Common myeloid progenitor, CD34-positive (primary cell): ENCODE measurements at regions of chr16 and their contacts with region 1.

Region 1: DNA sequence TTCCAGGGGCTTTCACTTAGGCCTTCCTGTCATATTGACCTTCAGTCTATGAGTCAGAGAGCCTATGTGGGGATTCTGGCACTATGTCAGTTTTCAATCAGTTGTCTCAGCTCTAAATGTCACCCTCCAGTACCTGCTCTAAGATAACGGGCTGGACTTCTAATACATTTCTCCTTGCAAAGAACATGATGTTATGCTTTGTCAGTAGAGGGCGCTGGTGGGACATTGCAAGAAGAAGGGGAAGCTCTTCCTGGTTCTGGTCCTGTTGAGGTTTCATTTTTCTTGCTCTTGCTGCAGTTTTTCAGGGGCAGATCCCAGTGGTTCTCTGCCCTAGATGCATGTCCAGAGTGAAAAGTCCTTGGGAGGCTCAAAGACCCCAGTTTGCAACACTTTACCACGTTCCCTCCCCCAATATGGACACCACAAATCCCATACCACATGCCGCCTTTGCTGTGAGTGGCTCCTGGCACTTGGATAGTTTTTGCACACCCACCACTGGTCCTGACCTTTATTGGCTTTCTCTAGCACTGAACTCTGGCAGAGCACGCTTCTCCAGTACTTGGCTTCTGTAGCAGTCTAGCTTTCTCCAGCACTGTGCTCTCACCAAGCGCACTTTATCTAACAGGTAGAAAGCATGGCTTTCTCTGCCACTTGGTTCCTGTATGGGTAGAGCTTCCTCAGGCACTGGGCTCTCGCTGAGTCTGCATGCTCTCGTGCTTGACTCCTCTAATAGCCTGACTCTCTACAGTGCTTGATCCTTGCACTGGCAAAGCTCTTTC is 49.0 kb downstream of the BCL7C start:
- DNase-seq: peak; percentile 92 to 96 (median 94)
- H3K4me3 ChIP-seq: peak overlapping the region in 2 of 7 experiments; percentile 32 to 63
- H3K27ac ChIP-seq: no peak overlapping the region
- H3K4me1 ChIP-seq: peaks cover 0 to 8% (median 7%) of the 10 kb centered on the region in 4 experiments
- H3K27me3 ChIP-seq: no peaks in the 10 kb centered on the region

Region 2: GRCh38 chr16:30834130-30834740 is 10.6 kb before region 1 on chr16:
- CTCF ChIA-PET with region 1: interaction called, 11 read pairs
- POLR2A ChIA-PET with region 1: no interaction called
- DNase-seq: no peak
- H3K4me3 ChIP-seq: no peak overlapping the region
- H3K27ac ChIP-seq: no peak overlapping the region
- H3K4me1 ChIP-seq: no peaks in the 10 kb centered on the region
- H3K27me3 ChIP-seq: no peaks in the 10 kb centered on the region

Region 3: DNA sequence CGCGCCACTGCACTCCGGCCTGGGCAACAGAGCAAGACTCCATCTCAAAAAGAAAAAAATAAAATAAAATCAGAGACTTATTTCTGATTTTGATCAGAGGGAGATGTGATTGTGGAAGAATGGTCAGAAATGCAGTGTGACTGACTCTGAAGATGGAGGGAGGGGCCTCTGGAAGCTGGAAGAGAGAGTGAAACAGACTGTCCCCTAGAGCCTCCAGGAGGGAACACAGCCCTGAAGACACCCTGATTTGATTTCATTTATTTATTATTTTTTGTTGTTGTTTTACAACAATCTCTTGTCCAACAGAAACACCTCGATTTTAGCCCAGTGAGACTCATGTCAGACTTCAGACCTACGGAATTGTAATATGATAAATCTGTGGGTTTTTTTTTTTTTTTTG is 22.9 kb after region 1 on chr16:
- CTCF ChIA-PET with region 1: interaction called, 36 read pairs
- POLR2A ChIA-PET with region 1: no interaction called
- DNase-seq: peak; percentile 20 to 46 (median 44)
- H3K4me3 ChIP-seq: no peak overlapping the region
- H3K27ac ChIP-seq: no peak overlapping the region
- H3K4me1 ChIP-seq: no peaks in the 10 kb centered on the region
- H3K27me3 ChIP-seq: no peaks in the 10 kb centered on the region

Region 4: DNA sequence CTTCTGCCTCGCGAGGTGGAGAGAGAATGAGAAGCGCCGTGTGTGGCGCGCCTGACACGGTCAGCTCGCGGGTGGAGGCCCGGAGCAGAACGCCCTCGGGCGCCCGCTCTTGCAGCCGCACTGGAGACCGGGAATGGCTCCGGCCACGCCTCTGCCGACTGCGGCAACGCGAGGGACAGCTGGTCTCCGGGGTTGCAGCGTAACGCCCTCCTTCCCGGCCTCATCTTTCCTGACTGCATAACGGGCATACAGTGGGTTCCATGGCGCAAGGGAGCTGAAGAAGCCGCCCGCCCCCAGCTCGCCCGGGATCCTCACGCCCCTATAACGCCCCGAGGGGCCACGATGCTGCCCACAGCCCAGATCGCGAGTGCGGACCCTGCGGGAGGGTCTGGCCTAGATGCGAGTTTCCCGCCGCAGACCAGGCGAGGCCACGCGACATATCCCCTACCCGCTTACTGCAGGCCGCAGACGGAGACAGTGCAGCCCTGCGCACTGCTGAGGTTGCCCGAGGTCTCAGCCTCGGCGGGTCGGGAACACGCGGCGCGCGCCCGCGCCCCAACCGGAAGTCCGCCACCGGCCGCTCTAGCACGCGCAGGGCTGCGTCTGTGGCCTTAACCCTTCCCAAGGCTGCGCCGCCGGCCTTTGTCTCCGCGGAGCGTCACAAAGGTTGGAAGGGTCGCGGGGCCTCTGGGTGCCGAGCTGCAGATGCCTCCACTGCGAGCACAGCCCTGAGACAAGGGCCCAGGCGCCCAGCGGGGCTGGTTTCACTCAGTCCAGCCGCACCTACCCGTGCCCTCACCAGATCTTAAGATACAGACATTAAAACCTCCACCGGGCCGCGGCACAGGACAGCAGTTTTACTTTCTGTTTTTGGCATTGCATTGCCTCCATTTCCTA is 30.2 kb after region 1 on chr16:
- CTCF ChIA-PET with region 1: interaction called, 36 read pairs
- POLR2A ChIA-PET with region 1: no interaction called
- DNase-seq: peak; percentile 90 to 94 (median 91)
- H3K4me3 ChIP-seq: peak overlapping the region; percentile 67 to 95 (median 91)
- H3K27ac ChIP-seq: peak overlapping the region; percentile 78 to 95
- H3K4me1 ChIP-seq: peaks cover 5 to 30% (median 23%) of the 10 kb centered on the region in 4 experiments
- H3K27me3 ChIP-seq: no peaks in the 10 kb centered on the region

Region 5: DNA sequence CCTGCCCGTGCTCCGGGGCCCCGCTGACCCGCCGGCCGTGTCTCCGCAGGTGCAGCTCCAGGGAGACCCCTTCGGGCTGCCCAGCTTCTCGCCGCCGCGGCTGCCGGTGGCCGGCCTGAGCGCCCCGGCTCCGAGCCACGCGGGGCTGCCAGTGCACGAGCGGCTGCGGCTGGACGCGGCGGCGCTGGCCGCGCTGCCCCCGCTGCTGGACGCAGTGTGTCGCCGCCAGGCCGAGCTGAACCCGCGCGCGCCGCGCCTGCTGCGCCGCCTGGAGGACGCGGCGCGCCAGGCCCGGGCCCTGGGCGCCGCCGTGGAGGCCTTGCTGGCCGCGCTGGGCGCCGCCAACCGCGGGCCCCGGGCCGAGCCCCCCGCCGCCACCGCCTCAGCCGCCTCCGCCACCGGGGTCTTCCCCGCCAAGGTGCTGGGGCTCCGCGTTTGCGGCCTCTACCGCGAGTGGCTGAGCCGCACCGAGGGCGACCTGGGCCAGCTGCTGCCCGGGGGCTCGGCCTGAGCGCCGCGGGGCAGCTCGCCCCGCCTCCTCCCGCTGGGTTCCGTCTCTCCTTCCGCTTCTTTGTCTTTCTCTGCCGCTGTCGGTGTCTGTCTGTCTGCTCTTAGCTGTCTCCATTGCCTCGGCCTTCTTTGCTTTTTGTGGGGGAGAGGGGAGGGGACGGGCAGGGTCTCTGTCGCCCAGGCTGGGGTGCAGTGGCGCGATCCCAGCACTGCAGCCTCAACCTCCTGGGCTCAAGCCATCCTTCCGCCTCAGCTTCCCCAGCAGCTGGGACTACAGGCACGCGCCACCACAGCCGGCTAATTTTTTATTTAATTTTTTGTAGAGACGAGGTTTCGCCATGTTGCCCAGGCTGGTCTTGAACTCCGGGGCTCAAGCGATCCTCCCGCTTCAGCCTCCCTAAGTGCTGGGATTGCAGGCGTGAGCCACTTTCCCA is 57.4 kb after region 1 on chr16:
- CTCF ChIA-PET with region 1: interaction called, 52 read pairs
- POLR2A ChIA-PET with region 1: interaction called, 7 read pairs
- DNase-seq: peak; percentile 54 to 78 (median 73)
- H3K4me3 ChIP-seq: peak overlapping the region; percentile 58 to 82 (median 75)
- H3K27ac ChIP-seq: peak overlapping the region; percentile 77 to 81
- H3K4me1 ChIP-seq: peaks cover 1 to 51% (median 40%) of the 10 kb centered on the region in 4 experiments
- H3K27me3 ChIP-seq: no peaks in the 10 kb centered on the region

Region 6: GRCh38 chr16:30921748-30922419 is 77.0 kb after region 1 on chr16:
- CTCF ChIA-PET with region 1: interaction called, 38 read pairs
- POLR2A ChIA-PET with region 1: no interaction called
- DNase-seq: peak; percentile 93 to 97 (median 95)
- H3K4me3 ChIP-seq: peak overlapping the region; percentile 82 to 99 (median 92)
- H3K27ac ChIP-seq: peak overlapping the region in 1 of 2 experiments; percentile 72
- H3K4me1 ChIP-seq: peaks cover 0 to 33% (median 30%) of the 10 kb centered on the region in 4 experiments
- H3K27me3 ChIP-seq: no peaks in the 10 kb centered on the region

Region 7: DNA sequence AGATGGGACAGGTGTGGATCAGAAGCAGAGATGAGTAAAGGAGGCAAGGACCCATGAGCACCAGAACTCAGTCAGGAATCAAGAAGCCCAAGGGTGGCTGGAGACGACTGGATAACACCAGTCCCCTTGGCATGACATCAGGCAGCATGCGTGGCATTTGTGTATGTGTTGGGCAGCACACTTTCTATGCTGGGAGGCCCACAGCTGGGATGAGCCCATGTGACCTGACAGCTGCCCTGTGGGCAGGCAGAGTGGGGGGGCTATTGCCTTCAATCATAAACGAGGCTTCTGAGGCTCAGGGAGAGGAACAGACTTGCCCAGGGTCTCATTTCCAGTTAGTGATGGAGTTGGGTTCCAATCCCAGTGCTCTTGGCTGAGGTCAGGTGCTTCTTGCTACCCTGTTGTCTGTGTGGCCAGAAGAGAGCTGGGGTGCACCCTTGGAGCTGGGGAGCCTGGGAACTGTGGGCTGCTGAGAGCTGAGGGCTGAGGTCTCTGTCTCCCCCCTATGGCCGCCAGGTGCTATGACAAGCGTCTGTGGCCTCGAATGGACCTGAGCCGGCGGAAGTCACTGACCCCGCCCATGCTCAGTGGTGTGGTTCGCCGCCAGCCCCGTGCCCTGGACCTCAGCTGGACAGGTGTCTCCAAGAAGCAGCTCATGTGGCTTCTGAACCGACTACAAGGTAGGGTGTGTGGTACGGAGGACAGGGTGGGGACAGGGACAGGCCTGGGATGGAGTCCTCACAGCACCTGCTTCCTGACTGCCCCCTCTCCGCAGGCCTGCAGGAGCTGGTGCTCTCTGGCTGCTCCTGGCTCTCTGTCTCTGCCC is 97.0 kb after region 1 on chr16:
- CTCF ChIA-PET with region 1: interaction called, 26 read pairs
- POLR2A ChIA-PET with region 1: no interaction called
- DNase-seq: peak; percentile 65 to 72 (median 68)
- H3K4me3 ChIP-seq: peak overlapping the region in 2 of 7 experiments; percentile 19 to 48
- H3K27ac ChIP-seq: peak overlapping the region in 1 of 2 experiments; percentile 40
- H3K4me1 ChIP-seq: peaks cover 0 to 27% (median 19%) of the 10 kb centered on the region in 4 experiments
- H3K27me3 ChIP-seq: no peaks in the 10 kb centered on the region

Region 8: DNA sequence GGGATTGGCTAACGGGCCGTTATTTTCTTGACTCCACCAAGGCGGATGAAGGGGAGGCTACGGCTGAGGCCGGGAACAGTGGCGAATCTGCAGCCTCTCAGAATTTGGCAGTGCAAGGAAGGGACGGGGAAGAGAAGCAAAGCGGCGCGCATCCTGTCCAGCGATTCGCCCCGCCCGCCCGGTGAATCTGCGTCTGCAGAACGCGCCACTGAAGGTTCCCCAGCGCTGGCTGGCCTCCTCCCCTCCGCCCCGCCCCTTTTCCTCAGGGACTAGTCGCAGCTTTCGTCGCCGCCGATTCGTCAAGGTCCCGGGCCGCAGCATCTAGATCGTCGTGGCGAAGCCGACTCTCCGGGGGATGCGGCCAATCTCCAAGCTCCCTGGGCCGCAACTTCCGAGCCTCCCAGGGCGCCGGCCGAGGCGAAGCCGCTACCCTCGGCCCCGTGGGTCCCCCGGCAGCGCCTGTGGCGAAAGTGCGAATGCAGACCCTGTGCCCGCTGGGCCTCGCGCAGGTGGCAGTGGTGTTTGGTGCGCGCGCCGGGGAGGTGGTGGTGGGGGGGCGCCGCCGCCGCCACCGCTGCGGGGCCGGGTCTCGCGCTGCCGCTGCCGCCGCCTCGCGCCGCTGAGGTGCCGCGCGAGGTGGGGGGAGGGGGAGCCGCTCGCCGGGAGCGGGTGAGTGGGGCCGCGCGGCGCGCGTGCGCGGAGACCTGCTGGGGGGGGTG is 112.8 kb after region 1 on chr16 and contains the start of gene SETD1A:
- CTCF ChIA-PET with region 1: no interaction called
- POLR2A ChIA-PET with region 1: no interaction called
- DNase-seq: peak; percentile 98 to 99 (median 98)
- H3K4me3 ChIP-seq: peak within 1 kb of the TSS; percentile 73 to 99 (median 91)
- H3K27ac ChIP-seq: peak within 1 kb of the TSS; percentile 99
- H3K4me1 ChIP-seq: peaks cover 0 to 36% (median 21%) of the 10 kb centered on the region in 4 experiments
- H3K27me3 ChIP-seq: no peaks in the 10 kb centered on the region